ENCODE measurements at regions of chr17 and their contacts with region 1.

Region 1: DNA sequence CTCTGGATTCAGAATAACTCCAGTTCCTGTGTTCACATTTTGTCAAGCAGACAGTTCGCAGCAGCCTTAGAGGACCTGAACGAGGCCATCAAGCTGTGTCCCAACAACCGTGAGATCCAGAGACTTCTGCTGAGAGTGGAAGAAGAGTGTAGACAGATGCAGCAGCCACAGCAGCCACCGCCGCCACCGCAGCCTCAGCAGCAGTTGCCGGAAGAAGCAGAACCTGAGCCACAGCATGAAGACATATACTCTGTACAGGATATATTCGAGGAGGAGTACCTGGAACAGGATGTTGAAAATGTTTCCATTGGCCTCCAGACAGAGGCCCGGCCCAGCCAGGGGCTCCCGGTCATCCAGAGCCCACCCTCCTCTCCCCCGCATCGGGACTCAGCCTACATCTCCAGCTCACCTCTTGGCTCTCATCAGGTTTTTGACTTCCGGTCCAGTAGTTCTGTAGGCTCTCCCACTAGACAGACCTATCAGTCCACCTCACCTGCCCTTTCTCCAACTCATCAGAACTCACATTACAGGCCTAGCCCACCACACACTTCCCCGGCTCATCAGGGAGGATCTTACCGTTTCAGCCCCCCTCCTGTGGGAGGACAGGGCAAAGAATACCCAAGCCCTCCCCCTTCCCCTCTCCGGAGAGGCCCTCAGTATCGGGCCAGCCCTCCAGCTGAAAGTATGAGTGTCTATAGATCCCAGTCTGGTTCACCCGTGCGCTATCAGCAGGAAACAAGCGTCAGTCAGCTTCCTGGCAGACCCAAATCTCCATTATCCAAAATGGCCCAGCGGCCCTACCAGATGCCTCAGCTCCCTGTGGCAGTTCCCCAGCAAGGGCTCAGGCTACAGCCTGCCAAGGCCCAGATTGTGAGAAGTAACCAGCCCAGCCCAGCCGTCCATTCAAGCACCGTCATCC is 25.9 kb downstream of the CYB561 start:
- DNase-seq: no peak
- H3K4me3 ChIP-seq: no peak overlapping the region
- H3K27ac ChIP-seq: no peak overlapping the region
- H3K4me1 ChIP-seq: no peaks in the 10 kb centered on the region
- H3K27me3 ChIP-seq: no peaks in the 10 kb centered on the region
- CTCF ChIP-seq: no peak
- POLR2A ChIP-seq: no peak

Region 2: DNA sequence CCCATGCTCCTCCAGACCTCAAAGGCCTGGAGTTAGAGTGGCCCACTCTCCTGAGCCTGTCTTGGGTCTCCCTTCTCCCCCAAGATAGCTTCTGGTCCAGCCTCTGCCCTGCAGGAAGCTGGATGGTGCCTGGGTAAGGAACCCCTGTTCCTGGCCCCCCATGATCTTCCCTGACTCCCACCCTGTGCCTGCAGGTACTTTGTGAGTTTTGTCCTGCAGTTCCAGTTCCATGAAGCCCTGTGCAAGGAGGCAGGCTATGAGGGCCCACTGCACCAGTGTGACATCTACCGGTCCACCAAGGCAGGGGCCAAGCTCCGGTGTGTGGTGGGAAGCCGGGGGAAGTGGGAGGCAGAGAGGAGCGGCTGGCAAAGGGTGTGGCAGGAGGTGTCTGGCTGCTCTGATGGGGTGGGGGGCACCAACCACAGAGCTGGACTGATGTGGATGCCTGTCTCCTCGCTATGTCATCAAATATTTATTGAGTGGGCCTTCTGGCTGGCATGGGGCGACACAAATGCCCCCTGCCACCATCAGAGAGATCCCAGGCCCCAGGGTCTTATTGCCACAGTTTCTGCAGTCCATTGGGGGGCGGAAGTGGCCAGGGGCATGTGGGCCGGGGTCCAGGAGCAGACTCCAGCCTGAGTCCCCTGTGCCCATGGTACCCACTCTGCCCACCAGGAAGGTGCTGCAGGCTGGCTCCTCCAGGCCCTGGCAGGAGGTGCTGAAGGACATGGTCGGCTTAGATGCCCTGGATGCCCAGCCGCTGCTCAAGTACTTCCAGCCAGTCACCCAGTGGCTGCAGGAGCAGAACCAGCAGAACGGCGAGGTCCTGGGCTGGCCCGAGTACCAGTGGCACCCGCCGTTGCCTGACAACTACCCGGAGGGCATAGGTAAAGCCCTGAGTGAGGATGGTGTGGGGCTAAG is 63.7 kb after region 1 on chr17:
- intact Hi-C with region 1: loop called (anchors 2 kb)
- DNase-seq: no peak
- H3K4me3 ChIP-seq: no peak overlapping the region
- H3K27ac ChIP-seq: no peak overlapping the region
- H3K4me1 ChIP-seq: no peaks in the 10 kb centered on the region
- H3K27me3 ChIP-seq: no peaks in the 10 kb centered on the region
- CTCF ChIP-seq: no peak
- POLR2A ChIP-seq: no peak

Measured in breast epithelium (tissue), 4 donors.